Activated CD8-positive, alpha-beta T cell treated with anti-CD3 and anti-CD28 coated beads for 36 hours (primary cell): ENCODE measurements at regions of chr12 and their contacts with region 1.

Region 1: DNA sequence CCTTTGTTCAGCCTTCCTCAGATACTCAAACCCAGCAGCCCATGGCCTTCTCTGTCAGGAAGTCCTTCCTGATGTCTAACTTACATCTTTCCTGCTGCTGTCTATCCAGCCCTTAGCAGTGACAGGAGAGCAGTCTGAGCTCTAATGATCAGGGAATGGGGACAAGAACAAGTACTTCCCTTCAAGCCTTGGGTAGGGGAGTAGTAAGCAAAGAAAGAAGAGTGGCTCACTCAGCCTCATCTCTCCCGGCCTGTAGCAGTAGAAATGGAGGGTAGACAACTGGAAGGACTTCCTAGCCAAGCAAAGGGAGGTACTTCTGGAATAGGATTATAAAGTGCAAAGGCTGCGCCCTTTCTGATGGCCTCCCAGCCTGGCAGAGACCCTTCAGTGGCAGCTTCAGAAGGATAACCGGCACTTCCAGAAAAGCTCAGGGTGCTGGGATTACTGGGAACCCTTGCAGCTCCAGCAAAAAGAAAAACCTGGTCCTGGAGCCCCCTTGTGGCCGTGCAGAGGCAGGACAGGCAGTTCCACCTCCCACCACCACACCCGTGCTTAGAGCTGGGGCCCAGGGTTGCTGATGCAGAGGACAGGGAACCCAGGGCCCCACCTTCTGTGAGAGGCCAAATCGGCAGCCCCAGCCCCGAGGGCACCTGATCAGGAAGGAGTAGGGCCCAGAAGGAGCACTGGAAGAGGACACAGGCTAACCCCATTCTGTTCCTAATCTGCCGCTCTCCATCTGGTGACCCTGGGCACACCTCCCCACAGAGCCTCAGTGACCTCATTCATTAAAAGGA is 12.4 kb upstream of the SMUG1 start:
- DNase-seq: peak; percentile 72
- ATAC-seq: peak; percentile 96
- H3K4me3 Mint-ChIP-seq: no peak overlapping the region
- H3K27ac Mint-ChIP-seq: no peak overlapping the region
- H3K4me1 Mint-ChIP-seq: no peaks in the 10 kb centered on the region
- H3K27me3 Mint-ChIP-seq: peaks cover 52% of the 10 kb centered on the region
- CTCF ChIP-seq: peak; percentile 94

Region 2: DNA sequence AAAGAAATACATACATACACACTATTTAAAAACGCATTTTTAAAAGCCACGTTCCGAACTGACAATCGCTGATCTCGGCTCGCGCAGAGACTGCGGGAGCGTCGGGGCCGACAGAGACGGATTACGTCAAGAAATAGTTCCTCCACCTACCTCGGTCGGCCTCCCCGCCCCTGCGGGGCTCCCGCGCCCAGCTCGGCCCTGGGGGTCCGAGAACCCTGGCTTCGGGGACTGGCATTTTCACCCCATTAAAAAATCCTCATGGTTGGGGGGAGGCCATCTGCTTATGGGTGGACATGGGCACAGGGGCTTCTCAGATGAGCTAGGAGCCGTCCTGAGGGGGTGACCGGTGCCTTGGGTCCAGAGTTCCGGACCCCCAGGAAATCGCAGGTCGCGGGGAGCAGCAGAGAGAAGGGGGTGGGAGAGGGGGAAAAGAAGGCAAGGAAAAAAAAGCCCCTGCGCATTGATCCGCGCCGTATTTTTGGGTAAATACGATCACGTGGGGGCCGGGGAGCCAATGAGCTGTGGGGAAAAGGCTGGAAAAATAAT is 201.6 kb before region 1 on chr12:
- CTCF ChIA-PET with region 1: interaction called, 94 read pairs
- POLR2A ChIA-PET with region 1: no interaction called
- intact Hi-C with region 1: no loop called
- DNase-seq: peak; percentile 55
- ATAC-seq: no peak
- H3K4me3 Mint-ChIP-seq: peak overlapping the region; percentile 43
- H3K27ac Mint-ChIP-seq: no peak overlapping the region
- H3K4me1 Mint-ChIP-seq: peaks cover 26% of the 10 kb centered on the region
- H3K27me3 Mint-ChIP-seq: peaks cover 85% of the 10 kb centered on the region
- CTCF ChIP-seq: no peak

Region 3: DNA sequence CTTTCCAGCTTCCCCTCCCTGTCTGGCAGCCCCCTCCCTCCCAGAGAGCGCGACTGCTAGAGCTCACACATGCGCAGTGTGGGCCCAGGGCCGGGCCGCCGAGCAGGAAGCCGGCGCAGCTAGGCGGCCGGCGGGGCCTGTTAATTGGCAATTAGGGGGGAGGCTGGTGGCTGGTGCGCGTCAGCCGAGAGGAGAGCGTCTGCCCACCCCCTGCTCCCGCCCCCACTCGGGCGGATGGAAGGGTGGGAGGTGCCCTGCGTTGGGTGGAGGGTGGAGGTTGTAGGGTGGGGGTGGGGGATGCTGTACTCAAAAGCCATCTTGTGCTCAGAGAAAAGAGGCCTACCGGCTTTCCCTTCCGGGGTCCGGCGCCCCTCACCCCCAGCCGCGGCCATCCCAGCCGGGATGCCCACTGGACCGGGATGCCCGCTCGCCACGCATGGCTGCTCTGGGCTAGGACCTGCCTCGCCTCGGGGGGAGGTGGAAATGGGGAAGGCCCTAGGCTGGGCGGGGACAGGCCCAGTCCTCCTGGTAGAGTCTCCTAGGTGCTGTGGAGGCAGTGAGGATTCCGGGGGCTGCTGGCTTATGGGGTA is 183.2 kb before region 1 on chr12:
- CTCF ChIA-PET with region 1: interaction called, 19 read pairs
- POLR2A ChIA-PET with region 1: interaction called, 3 read pairs
- intact Hi-C with region 1: no loop called
- DNase-seq: peak; percentile 84
- ATAC-seq: peak; percentile 92
- H3K4me3 Mint-ChIP-seq: peak overlapping the region; percentile 76
- H3K27ac Mint-ChIP-seq: no peak overlapping the region
- H3K4me1 Mint-ChIP-seq: peaks cover 15% of the 10 kb centered on the region
- H3K27me3 Mint-ChIP-seq: peaks cover 67% of the 10 kb centered on the region
- CTCF ChIP-seq: no peak

Region 4: DNA sequence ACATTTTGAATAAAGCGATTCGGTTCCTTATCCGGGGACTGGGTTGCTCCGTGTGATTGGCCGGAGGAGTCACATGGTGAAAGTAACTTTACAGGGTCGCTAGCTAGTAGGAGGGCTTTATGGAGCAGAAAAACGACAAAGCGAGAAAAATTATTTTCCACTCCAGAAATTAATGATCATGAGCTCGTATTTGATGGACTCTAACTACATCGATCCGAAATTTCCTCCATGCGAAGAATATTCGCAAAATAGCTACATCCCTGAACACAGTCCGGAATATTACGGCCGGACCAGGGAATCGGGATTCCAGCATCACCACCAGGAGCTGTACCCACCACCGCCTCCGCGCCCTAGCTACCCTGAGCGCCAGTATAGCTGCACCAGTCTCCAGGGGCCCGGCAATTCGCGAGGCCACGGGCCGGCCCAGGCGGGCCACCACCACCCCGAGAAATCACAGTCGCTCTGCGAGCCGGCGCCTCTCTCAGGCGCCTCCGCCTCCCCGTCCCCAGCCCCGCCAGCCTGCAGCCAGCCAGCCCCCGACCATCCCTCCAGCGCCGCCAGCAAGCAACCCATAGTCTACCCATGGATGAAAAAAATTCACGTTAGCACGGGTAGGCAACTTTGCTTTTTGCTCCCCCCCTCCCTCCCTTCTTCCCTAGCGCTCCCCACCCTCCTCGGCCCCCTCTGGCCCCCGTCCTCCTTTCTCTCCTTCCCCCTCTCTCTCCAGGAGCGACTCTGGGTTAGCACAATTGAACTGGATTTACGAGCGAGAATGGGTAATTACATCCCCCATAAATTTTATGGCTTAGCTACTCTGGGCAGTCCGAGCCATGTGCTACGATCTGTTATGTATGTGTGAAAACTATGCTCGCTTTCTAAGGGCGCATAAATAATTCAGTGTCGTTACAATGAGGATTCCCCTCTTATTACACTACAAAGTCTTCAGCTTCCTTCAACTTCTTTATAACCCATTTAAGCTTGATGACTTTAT is 147.2 kb before region 1 on chr12 and contains the start of gene HOXC4:
- CTCF ChIA-PET with region 1: interaction called, 16 read pairs
- POLR2A ChIA-PET with region 1: no interaction called
- intact Hi-C with region 1: no loop called
- DNase-seq: peak; percentile 48
- ATAC-seq: peak; percentile 72
- H3K4me3 Mint-ChIP-seq: peak within 1 kb of the TSS; percentile 73
- H3K27ac Mint-ChIP-seq: peak within 1 kb of the TSS; percentile 82
- H3K4me1 Mint-ChIP-seq: peaks cover 30% of the 10 kb centered on the region
- H3K27me3 Mint-ChIP-seq: peaks cover 62% of the 10 kb centered on the region
- CTCF ChIP-seq: no peak
- total RNA-seq, gene HOXC4: 0.89 to 1.2 TPM

Region 5: DNA sequence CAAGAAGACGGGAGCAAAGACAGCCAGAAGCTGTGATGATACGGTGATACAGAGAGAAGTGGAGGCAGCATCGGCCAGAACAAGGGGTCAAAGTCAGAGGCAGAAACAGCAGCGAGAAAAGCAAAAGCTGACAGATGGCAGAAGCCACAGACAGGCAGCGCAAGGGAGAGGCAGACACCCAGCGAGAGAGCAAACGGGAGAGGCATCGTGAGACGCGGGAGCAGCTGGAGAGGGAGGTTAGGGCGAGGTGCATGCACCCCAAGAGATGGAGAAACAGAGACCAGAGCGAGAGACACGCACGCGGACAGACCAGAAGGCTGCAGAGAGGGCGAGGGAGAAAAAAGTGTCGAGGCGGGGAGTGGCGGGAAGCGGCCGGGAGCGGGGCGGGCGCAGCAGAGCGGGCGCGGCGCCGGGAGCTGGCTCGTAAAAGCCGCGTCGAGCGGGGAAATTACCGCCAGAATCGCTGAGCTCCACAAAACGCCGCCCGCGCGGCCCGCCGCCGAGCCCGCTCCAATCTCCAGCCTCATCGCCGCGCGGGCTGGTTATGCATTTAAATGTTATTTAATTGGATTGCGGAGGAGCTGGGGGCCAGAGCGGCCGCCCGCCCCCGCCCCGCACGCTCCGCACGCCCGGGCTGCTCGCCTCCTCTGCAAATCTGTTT is 28.0 kb before region 1 on chr12:
- CTCF ChIA-PET with region 1: interaction called, 12 read pairs
- POLR2A ChIA-PET with region 1: no interaction called
- intact Hi-C with region 1: no loop called
- DNase-seq: peak; percentile 51
- ATAC-seq: peak; percentile 76
- H3K4me3 Mint-ChIP-seq: no peak overlapping the region
- H3K27ac Mint-ChIP-seq: no peak overlapping the region
- H3K4me1 Mint-ChIP-seq: no peaks in the 10 kb centered on the region
- H3K27me3 Mint-ChIP-seq: peaks cover 4% of the 10 kb centered on the region
- CTCF ChIP-seq: no peak

Region 6: GRCh38 chr12:54249489-54249888 is 48.3 kb after region 1 on chr12:
- CTCF ChIA-PET with region 1: no interaction called
- POLR2A ChIA-PET with region 1: no interaction called
- intact Hi-C with region 1: no loop called
- DNase-seq: no peak
- ATAC-seq: no peak
- H3K4me3 Mint-ChIP-seq: no peak overlapping the region
- H3K27ac Mint-ChIP-seq: no peak overlapping the region
- H3K4me1 Mint-ChIP-seq: peaks cover 11% of the 10 kb centered on the region
- H3K27me3 Mint-ChIP-seq: no peaks in the 10 kb centered on the region
- CTCF ChIP-seq: no peak